KBM-7 (cell line): ENCODE measurements at regions of chr9 and their contacts with region 1.

Region 1: GRCh38 chr9:21789541-21790037 is 12.8 kb upstream of the MTAP start:
- DNase-seq: peak; percentile 93

Region 2: GRCh38 chr9:21244836-21245235 is 544.8 kb before region 1 on chr9:
- in situ Hi-C with region 1: no loop called
- DNase-seq: peak; percentile 32

Region 3: GRCh38 chr9:21317956-21318923 is 471.3 kb before region 1 on chr9:
- in situ Hi-C with region 1: loop called (anchors 25 kb)
- DNase-seq: peak; percentile 69

Region 4: GRCh38 chr9:21527579-21527978 is 262.0 kb before region 1 on chr9:
- in situ Hi-C with region 1: no loop called
- DNase-seq: no peak